B cell (primary cell): ENCODE measurements at regions of chr9 and their contacts with region 1.

Region 1: GRCh38 chr9:70602321-70603019 is 188.0 kb upstream of the KLF9 start:
- DNase-seq: peak; percentile 72
- ATAC-seq: peak; percentile 53
- H3K4me3 ChIP-seq: no peak overlapping the region
- H3K4me3 Mint-ChIP-seq: no peak overlapping the region
- H3K27ac ChIP-seq: no peak overlapping the region
- H3K27ac Mint-ChIP-seq: no peak overlapping the region
- H3K4me1 ChIP-seq: peaks cover 2% of the 10 kb centered on the region in 2 donors
- H3K4me1 Mint-ChIP-seq: peaks cover 7% of the 10 kb centered on the region
- H3K27me3 ChIP-seq: no peaks in the 10 kb centered on the region
- H3K27me3 Mint-ChIP-seq: peaks cover 4% of the 10 kb centered on the region
- CTCF ChIP-seq: peak; percentile 86

Region 2: DNA sequence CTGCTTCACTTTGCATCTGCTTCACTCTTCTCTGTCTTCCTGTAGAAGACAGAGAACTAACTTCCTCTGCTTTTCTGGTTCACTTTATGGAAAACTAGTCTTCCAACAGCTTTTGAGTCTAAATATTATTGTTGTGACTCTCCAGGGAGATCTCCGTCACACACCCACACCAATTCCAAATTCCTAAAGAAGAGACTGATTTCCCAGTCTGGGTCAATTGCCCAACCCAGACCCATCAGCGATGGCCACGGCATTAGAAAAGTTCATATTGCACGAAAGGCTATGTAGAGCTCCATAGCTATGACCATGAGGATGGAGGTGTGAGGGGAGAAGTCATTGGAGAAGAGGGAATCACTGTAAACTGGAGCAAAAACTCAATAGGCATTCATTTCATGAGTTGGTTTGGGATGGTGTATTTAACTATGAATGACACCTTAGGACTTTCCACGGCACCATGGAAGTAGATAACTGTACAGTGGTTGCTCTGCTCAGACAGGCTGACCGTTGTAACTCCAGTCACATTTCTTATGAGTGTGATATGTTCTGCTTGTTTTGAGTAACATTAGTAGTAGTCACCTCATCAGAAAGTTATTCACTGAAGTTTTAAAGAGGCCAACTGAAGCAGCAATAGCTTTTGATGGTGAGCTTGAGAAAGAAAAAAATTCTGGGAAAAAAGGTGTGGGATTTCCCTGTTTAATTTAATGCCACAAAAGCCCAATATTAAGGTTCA is 636.9 kb before region 1 on chr9:
- CTCF ChIA-PET with region 1: interaction called, 48 read pairs
- POLR2A ChIA-PET with region 1: no interaction called
- intact Hi-C with region 1: no loop called
- DNase-seq: no peak
- ATAC-seq: no peak
- H3K4me3 ChIP-seq: no peak overlapping the region
- H3K4me3 Mint-ChIP-seq: no peak overlapping the region
- H3K27ac ChIP-seq: no peak overlapping the region
- H3K27ac Mint-ChIP-seq: no peak overlapping the region
- H3K4me1 ChIP-seq: no peaks in the 10 kb centered on the region
- H3K4me1 Mint-ChIP-seq: no peaks in the 10 kb centered on the region
- H3K27me3 ChIP-seq: no peaks in the 10 kb centered on the region
- H3K27me3 Mint-ChIP-seq: peaks cover 13% of the 10 kb centered on the region
- CTCF ChIP-seq: no peak

Region 3: DNA sequence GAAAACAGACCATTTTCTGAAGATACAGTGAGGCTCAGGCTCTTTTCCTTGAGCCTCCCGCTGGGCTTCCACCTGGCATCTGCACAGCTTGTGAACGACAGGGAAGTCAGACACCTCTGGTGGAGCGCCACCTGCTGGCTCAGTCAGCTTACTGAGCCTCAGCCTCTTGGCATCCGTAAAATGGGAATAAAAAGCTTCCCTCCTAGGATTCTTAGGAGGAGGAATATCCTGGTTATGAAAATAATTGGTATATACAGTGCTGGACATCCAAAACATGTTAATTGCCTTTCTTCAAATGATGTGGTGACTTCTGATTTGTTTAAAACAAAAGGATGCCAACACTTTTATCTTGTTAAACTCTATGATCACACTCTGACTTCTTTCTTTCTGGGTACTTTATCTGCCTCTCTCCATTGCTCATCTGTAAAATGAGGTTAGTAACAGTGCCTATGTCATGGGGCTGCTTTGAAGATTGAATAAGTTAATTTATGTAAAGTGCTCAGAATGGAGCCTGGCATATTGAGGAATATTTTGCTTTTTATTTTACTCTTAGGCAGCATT is 491.3 kb before region 1 on chr9:
- CTCF ChIA-PET with region 1: interaction called, 10 read pairs
- POLR2A ChIA-PET with region 1: no interaction called
- intact Hi-C with region 1: loop called (anchors 5 kb)
- DNase-seq: peak; percentile 55
- ATAC-seq: no peak
- H3K4me3 ChIP-seq: no peak overlapping the region
- H3K4me3 Mint-ChIP-seq: no peak overlapping the region
- H3K27ac ChIP-seq: no peak overlapping the region
- H3K27ac Mint-ChIP-seq: no peak overlapping the region
- H3K4me1 ChIP-seq: peaks cover 5 to 7% of the 10 kb centered on the region in 2 donors
- H3K4me1 Mint-ChIP-seq: peaks cover 9% of the 10 kb centered on the region
- H3K27me3 ChIP-seq: peaks cover 0 to 3% (median 1%) of the 10 kb centered on the region in 4 experiments
- H3K27me3 Mint-ChIP-seq: peaks cover 27% of the 10 kb centered on the region
- CTCF ChIP-seq: peak; percentile 95

Region 4: DNA sequence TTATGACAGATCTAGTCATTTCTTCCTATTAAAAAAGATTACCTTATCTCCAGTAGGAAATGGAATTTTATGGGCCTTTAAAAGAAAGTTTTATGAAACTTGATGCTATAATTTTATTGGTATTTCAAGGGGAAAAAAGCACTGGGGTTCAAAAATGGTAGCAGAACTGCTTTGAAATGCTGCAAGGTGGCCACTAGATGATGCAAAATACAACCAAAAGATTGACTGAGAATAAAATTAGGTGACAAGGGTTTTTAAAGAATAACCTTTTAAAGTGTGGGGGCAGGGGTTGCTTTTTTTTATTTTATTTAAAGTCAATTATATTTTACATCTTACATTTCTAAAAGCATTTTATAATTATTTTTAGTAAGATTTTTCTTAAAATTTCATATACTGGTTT is 249.7 kb before region 1 on chr9:
- CTCF ChIA-PET with region 1: interaction called, 19 read pairs
- POLR2A ChIA-PET with region 1: no interaction called
- intact Hi-C with region 1: loop called (anchors 1 kb)
- DNase-seq: peak; percentile 24
- ATAC-seq: no peak
- H3K4me3 ChIP-seq: no peak overlapping the region
- H3K4me3 Mint-ChIP-seq: no peak overlapping the region
- H3K27ac ChIP-seq: no peak overlapping the region
- H3K27ac Mint-ChIP-seq: no peak overlapping the region
- H3K4me1 ChIP-seq: no peaks in the 10 kb centered on the region
- H3K4me1 Mint-ChIP-seq: no peaks in the 10 kb centered on the region
- H3K27me3 ChIP-seq: no peaks in the 10 kb centered on the region
- H3K27me3 Mint-ChIP-seq: no peaks in the 10 kb centered on the region
- CTCF ChIP-seq: peak; percentile 75

Region 5: GRCh38 chr9:70484210-70485130 is 118.0 kb before region 1 on chr9:
- CTCF ChIA-PET with region 1: interaction called, 18 read pairs
- POLR2A ChIA-PET with region 1: no interaction called
- intact Hi-C with region 1: loop called (anchors 1 kb)
- DNase-seq: peak; percentile 67
- ATAC-seq: peak; percentile 78
- H3K4me3 ChIP-seq: no peak overlapping the region
- H3K4me3 Mint-ChIP-seq: no peak overlapping the region
- H3K27ac ChIP-seq: no peak overlapping the region
- H3K27ac Mint-ChIP-seq: no peak overlapping the region
- H3K4me1 ChIP-seq: no peaks in the 10 kb centered on the region
- H3K4me1 Mint-ChIP-seq: peaks cover 1% of the 10 kb centered on the region
- H3K27me3 ChIP-seq: peaks cover 0 to 3% (median 0%) of the 10 kb centered on the region in 4 experiments
- H3K27me3 Mint-ChIP-seq: peaks cover 24% of the 10 kb centered on the region
- CTCF ChIP-seq: peak; percentile 73